ENCODE measurements at regions of chr3 and their contacts with region 1.

Region 1: DNA sequence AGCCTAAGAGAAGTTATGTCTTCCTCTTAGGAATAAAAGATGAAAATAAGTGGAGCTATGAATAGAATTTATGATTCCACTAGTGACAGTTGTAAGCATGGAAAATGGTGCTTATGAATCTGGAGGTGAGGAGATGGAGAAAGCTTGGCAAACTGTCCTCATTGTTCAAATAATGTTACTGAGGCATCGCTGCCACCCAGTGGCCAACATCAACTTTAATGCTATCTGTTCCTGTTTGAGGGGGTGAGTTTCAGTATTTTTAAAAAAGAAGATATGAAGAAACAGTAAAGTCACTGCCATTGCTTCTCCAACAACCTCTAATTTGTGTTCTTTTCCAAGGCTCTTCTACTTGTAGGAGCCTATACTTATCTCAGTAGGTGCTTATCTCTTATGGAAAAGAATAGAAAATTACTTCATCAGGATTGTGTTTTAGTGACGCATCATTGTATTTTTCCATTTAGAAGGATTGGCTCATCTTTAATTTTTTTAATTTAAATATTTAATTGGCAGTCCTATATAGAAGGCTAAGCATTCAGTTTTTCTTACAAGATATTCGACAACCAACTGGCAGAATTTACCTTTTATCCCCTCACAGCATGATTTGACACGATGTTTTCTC is 260.4 kb upstream of the P2RY1 start:
- DNase-seq: peak in 1 of 2 donors; percentile 72
- H3K4me3 ChIP-seq: no peak overlapping the region
- H3K27ac ChIP-seq: no peak overlapping the region
- H3K4me1 ChIP-seq: no peaks in the 10 kb centered on the region
- H3K27me3 ChIP-seq: no peaks in the 10 kb centered on the region
- CTCF ChIP-seq: peak; percentile 10 to 54 (median 34)

Region 2: DNA sequence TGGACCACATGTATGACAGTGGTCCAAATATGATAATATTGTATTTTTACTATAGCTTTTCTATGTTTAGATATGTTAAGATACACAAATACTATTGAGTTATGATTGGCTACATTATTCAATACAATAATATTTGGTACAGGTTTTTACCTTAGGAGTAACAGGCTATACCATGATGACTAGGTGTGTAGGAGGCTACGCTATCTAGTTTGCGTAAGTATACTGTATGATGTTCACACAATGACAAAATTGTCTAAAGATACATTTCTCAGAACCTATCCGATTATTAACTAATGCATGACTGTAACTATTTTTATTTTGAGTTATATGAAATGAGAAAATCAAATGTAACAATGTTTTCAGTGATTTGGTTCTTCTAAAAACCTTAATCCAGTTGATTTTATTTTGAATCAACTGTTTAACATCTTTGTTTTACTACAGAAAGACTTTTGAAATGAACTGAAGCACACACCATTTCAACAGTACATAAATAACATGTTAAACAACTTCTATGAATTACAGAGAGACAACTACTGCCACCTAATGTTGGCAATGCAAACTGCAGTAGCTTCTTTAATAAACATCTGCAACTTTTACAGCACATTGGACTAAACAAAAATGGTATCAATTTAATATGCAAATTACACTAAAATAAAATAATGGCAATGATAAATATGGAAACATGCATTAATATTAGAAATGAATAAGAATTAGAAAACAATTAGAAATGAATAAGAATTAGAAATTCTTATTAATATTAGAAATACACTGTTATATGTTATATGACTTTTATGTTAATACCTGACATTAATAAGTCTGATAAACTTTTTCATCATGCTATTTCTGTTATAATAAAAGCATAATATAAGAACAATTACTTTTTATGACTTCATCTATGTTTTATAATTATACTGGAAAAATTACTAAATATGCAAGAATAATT is 50.1 kb before region 1 on chr3:
- intact Hi-C with region 1: loop called (anchors 5 kb)
- DNase-seq: no peak
- H3K4me3 ChIP-seq: no peak overlapping the region
- H3K27ac ChIP-seq: no peak overlapping the region
- H3K4me1 ChIP-seq: no peaks in the 10 kb centered on the region
- H3K27me3 ChIP-seq: no peaks in the 10 kb centered on the region
- CTCF ChIP-seq: peak; percentile 46 to 86 (median 79)

Region 3: DNA sequence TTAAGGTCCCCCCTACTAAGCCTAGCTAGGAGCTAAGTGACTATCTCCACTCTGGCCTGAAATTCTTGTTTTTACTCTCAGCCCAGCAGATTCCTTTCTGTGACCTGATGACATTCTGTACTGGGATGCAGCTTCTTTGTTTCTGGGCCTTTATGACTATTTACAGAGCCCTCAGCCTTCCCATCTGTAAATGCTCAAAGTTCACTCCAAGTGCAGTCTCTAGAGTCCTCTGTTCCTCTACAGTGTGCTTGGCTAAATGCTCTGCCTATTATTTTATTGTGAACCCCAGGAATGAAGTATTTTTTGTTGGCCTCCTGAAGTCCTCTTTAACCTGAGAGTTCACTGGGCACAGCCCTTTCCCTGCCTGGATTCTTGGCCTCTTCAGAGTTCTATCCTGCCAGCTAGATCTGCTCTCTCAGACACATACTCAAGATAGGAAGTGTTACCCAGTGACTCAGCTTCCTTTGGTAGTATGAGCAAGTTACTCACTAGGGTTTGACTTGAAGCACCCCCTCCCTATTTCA is 17.8 kb before region 1 on chr3:
- intact Hi-C with region 1: no loop called
- DNase-seq: no peak
- H3K4me3 ChIP-seq: no peak overlapping the region
- H3K27ac ChIP-seq: peak overlapping the region; percentile 28 to 83
- H3K4me1 ChIP-seq: peaks cover 6 to 25% of the 10 kb centered on the region in 2 donors
- H3K27me3 ChIP-seq: no peaks in the 10 kb centered on the region
- CTCF ChIP-seq: no peak